ENCODE measurements at regions of chr12 and their contacts with region 1.

Region 1: GRCh38 chr12:111981987-111982386 is 31.0 kb downstream of the TMEM116 start:
- DNase-seq: no peak

Region 2: GRCh38 chr12:112183141-112184021 is 201.4 kb after region 1 on chr12:
- intact Hi-C with region 1: loop called in 1 of 2 experiments (anchors 2 kb)
- DNase-seq: no peak

Region 3: GRCh38 chr12:112382232-112382796 is 400.3 kb after region 1 on chr12 and contains the start of gene HECTD4:
- intact Hi-C with region 1: no loop called
- DNase-seq: peak; percentile 98
- total RNA-seq, gene HECTD4: 46.7 to 47.9 TPM

Measured in posterior vena cava (tissue), 2 donors.